Dorsolateral prefrontal cortex (tissue), 120 donors: ENCODE measurements at regions of chr4 and their contacts with region 1.

Region 1: DNA sequence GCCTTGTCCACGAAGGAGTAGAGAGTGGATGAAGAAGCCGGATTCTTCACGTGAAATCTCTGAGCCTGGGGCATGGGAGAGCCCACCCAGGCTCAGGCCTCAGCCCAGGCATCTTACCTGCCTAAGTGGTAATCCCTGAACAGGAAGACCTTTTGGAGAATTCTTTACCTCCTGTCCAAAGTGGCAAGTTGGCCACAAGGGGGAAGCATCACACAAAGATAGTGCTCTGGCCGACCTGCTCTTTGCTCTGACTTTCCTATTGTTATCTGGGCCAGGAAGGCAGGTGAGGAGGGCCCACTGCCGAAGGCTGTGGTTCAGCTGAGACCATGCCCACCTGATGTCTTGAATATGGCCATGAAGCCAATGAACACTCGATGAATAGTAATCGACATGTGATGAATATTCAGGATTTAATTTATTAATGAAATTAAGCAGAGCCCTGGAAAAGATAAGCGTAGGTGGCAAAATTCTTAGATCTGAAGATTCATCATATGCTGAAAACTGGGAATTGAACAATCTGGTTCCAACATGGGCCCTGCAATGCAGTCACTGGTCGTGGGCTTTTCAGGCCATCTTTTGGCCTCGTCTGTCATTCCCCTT is 93.8 kb downstream of the PDGFRA start:
- DNase-seq: peak in 9 of 10 donors; percentile 21 to 72 (median 64)
- H3K4me3 ChIP-seq: no peak overlapping the region
- H3K27ac ChIP-seq: peak overlapping the region in 2 of 59 donors; percentile 16 to 33
- H3K27me3 ChIP-seq: peaks cover 0 to 4% (median 0%) of the 10 kb centered on the region in 45 donors
- CTCF ChIP-seq: peak; percentile 38 to 95 (median 81)

Region 2: GRCh38 chr4:54384563-54384962 is 61.6 kb after region 1 on chr4:
- intact Hi-C with region 1: loop called in 1 of 2 experiments (anchors 10 kb)
- DNase-seq: peak in 7 of 10 donors; percentile 22 to 61 (median 56)
- H3K4me3 ChIP-seq: no peak overlapping the region
- H3K27ac ChIP-seq: no peak overlapping the region
- H3K27me3 ChIP-seq: no peaks in the 10 kb centered on the region
- CTCF ChIP-seq: peak; percentile 12 to 75 (median 55)

Region 3: GRCh38 chr4:54440394-54441136 is 117.6 kb after region 1 on chr4:
- intact Hi-C with region 1: loop called (anchors 2 kb)
- DNase-seq: no peak
- H3K4me3 ChIP-seq: peak overlapping the region in 45 of 59 donors; percentile 1 to 50 (median 28)
- H3K27ac ChIP-seq: peak overlapping the region in 50 of 59 donors; percentile 1 to 84 (median 57)
- H3K27me3 ChIP-seq: peaks cover 0 to 6% (median 0%) of the 10 kb centered on the region in 45 donors
- CTCF ChIP-seq: peak; percentile 33 to 86 (median 75)

Region 4: DNA sequence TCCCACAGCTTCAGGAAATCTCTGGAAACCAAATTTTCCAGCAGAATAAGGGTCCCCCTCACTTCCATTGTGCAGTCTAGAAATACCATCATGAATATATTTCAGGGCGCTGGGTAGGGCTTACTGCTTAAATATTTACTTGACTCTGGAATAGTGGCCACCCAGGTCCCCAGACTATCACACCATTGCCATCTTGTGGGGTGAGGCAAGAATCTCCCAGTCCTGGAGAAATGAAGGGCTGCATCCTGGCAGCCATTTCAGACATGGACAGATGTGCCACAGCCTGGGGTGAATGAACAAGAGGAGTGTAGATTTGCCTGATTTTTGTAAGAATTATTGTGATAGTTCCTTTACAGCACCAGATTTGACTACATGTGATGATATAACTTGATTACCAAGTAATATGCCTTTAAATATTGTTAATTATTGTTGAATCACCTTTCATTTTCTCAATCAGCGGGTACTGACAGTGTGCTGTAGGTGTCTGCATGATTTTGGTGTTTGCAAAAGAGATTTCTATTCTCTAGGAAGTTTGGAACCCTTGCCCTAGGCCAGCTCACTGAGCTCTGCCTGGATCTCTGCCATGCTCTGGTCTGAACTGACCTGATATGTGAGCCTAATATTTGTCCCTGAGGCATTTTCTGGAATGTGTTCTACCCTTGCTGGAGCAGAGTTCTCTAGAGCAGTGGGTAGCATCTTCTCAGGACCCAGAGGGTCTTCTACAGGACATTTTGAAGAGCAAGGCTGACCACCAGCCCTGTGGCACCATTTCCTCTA is 518.3 kb after region 1 on chr4:
- intact Hi-C with region 1: loop called in 1 of 2 experiments (anchors 5 kb)
- DNase-seq: peak in 4 of 10 donors; percentile 15 to 47 (median 38)
- H3K4me3 ChIP-seq: no peak overlapping the region
- H3K27ac ChIP-seq: peak overlapping the region in 4 of 59 donors; percentile 10 to 42 (median 20)
- H3K27me3 ChIP-seq: no peaks in the 10 kb centered on the region
- CTCF ChIP-seq: peak in 35 of 56 donors; percentile 16 to 57 (median 32)

Region 5: GRCh38 chr4:54961357-54961975 is 638.5 kb after region 1 on chr4:
- intact Hi-C with region 1: loop called (anchors 5 to 10 kb)
- DNase-seq: no peak
- H3K4me3 ChIP-seq: no peak overlapping the region
- H3K27ac ChIP-seq: no peak overlapping the region
- H3K27me3 ChIP-seq: peaks cover 0 to 3% (median 0%) of the 10 kb centered on the region in 45 donors
- CTCF ChIP-seq: peak; percentile 23 to 76 (median 62)

Region 6: GRCh38 chr4:55312489-55313101 is 989.7 kb after region 1 on chr4:
- intact Hi-C with region 1: loop called in 1 of 2 experiments (anchors 10 kb)
- DNase-seq: peak in 2 of 10 donors; percentile 6 to 32
- H3K4me3 ChIP-seq: peak overlapping the region in 22 of 59 donors; percentile 0 to 46 (median 29)
- H3K27ac ChIP-seq: peak overlapping the region in 51 of 59 donors; percentile 4 to 85 (median 71)
- H3K27me3 ChIP-seq: no peaks in the 10 kb centered on the region
- CTCF ChIP-seq: peak in 54 of 56 donors; percentile 15 to 69 (median 51)